Calu3 (cell line): ENCODE measurements at regions of chr12 and their contacts with region 1.

Region 1: DNA sequence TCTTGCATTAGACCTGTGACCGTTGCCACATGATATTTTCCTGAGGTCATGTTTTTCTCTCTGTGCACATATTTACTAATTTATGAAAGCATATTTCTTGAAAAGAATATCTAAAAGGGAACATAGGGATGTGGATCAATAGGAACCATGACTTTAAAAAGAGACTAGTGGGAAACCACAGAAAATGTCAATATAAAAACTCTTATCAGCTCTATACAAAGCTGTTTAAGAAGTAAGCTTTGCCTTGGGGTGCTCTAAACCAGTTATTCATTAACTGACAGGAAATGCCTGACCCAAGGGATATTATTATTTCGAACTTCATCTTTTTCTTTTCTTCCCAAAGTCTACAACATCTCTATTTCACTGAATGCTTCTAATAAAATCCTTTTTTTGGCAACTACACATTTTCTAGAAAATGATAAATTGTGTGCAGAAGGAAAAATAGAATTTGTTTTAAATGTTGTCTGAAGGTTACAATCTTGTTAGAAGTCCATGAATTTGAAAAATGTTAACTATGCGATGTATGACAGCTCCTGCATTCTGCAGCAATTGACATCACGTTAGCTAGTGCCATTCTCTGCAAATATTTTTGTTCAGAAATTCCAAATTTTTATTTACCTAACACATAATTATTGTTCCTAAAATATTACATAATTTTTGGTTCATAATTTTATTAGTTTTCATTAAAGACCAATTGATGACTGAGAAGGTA is 345.0 kb downstream of the SLC16A7 start:
- DNase-seq: no peak
- H3K4me3 Mint-ChIP-seq: peak overlapping the region; percentile 52
- H3K27ac Mint-ChIP-seq: peak overlapping the region; percentile 45
- H3K4me1 Mint-ChIP-seq: peaks cover 59% of the 10 kb centered on the region
- H3K27me3 Mint-ChIP-seq: no peaks in the 10 kb centered on the region
- CTCF ChIP-seq: no peak

Region 2: GRCh38 chr12:59911516-59911915 is 29.3 kb before region 1 on chr12:
- CTCF ChIA-PET with region 1: no interaction called
- intact Hi-C with region 1: loop called (anchors 2 kb)
- DNase-seq: peak; percentile 58
- H3K4me3 Mint-ChIP-seq: peak overlapping the region; percentile 47
- H3K27ac Mint-ChIP-seq: peak overlapping the region; percentile 80
- H3K4me1 Mint-ChIP-seq: peaks cover 34% of the 10 kb centered on the region
- H3K27me3 Mint-ChIP-seq: no peaks in the 10 kb centered on the region
- CTCF ChIP-seq: no peak

Region 3: GRCh38 chr12:60290532-60290931 is 349.7 kb after region 1 on chr12:
- CTCF ChIA-PET with region 1: no interaction called
- intact Hi-C with region 1: no loop called
- DNase-seq: no peak
- H3K4me3 Mint-ChIP-seq: no peak overlapping the region
- H3K27ac Mint-ChIP-seq: no peak overlapping the region
- H3K4me1 Mint-ChIP-seq: no peaks in the 10 kb centered on the region
- H3K27me3 Mint-ChIP-seq: no peaks in the 10 kb centered on the region
- CTCF ChIP-seq: no peak

Region 4: DNA sequence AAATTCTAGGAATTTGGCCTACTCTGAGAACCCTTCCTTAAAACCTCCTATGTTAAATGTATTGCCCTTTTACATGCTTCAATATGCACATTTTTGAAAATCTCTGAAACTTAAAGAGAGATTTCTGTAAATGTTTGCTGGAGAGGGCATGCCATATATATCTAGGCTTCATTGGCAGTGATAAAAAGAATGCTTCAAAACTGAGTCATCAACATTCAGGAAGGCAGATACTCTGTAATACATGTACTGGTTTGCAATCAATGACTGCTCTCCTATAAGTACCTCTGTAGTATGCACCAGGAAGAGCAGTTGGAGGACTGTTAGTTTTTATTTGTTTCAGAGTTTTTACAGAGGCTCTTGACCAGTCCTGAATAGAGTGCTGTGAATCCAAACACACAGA is 395.0 kb after region 1 on chr12:
- CTCF ChIA-PET with region 1: no interaction called
- intact Hi-C with region 1: loop called (anchors 10 kb)
- DNase-seq: peak; percentile 4
- H3K4me3 Mint-ChIP-seq: no peak overlapping the region
- H3K27ac Mint-ChIP-seq: peak overlapping the region; percentile 50
- H3K4me1 Mint-ChIP-seq: peaks cover 26% of the 10 kb centered on the region
- H3K27me3 Mint-ChIP-seq: no peaks in the 10 kb centered on the region
- CTCF ChIP-seq: no peak